Ascending aorta (tissue), 2 donors: ENCODE measurements at regions of chr2 and their contacts with region 1.

Region 1: GRCh38 chr2:218568190-218569037 is at the starts of genes CNOT9 and USP37:
- DNase-seq: peak; percentile 96 to 100
- H3K4me3 ChIP-seq: peak within 1 kb of the TSS; percentile 75 to 89
- H3K27ac ChIP-seq: peak within 1 kb of the TSS; percentile 91 to 95
- H3K4me1 ChIP-seq: peaks cover 5 to 26% of the 10 kb centered on the region in 2 donors
- H3K27me3 ChIP-seq: no peaks in the 10 kb centered on the region
- CTCF ChIP-seq: no peak
- total RNA-seq, gene CNOT9: 46.7 TPM
- total RNA-seq, gene USP37: 11.8 TPM

Region 2: DNA sequence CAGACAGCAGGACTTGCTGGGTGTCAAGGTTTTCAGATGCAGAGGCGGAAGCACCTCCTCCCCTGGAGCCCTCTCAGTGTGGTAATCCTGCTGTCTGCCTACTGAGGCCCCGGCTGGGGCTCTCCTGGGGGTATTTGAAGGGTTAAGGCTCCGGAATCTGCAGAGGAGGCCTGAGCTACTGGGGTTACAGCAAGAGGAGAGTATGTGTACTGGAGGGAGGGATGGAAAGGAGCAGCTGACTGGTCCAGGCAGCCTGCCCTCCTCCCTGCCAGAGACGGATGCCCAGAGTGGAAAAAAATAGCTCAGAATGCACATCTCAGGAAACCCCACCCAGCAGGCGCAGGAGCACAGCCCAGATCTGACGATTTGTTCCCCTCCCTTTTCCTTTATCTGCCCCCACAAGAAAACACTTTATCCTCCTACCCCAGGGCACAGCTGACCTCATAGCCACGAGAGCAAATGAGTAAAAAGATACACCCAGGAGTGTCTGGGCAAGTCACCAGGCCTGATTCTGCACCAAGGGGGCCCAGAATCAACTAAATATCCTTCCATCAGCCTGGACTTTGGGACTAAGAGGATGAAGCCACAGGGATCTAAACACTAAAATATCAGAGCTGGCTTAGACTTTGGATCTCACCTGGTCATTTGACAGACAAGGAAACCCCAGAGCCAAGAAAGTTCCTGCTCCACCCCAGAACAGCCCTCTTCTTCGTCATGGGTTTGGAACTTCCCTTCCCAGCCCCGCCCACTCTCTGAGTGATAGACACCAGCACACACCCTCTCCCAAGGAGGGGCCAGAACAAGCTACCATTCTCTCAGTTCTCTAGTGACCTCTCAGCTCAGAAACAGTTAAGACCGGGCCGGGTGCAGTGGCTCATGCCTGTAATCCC is 281.6 kb before region 1 on chr2:
- intact Hi-C with region 1: loop called (anchors 5 kb)
- DNase-seq: peak; percentile 91 to 97
- H3K4me3 ChIP-seq: peak overlapping the region; percentile 48 to 68
- H3K27ac ChIP-seq: peak overlapping the region; percentile 98 to 99
- H3K4me1 ChIP-seq: peaks cover 44 to 70% of the 10 kb centered on the region in 2 donors
- H3K27me3 ChIP-seq: no peaks in the 10 kb centered on the region
- CTCF ChIP-seq: no peak

Region 3: GRCh38 chr2:218448934-218449333 is 119.5 kb before region 1 on chr2:
- intact Hi-C with region 1: no loop called
- DNase-seq: no peak
- H3K4me3 ChIP-seq: no peak overlapping the region
- H3K27ac ChIP-seq: no peak overlapping the region
- H3K4me1 ChIP-seq: no peaks in the 10 kb centered on the region
- H3K27me3 ChIP-seq: no peaks in the 10 kb centered on the region
- CTCF ChIP-seq: no peak